ENCODE measurements at regions of chr1 and their contacts with region 1.

Region 1: GRCh38 chr1:232353001-232353400 is 276.9 kb downstream of the SIPA1L2 start:
- DNase-seq: no peak
- ATAC-seq: no peak
- H3K4me3 ChIP-seq: no peak overlapping the region
- H3K27ac ChIP-seq: no peak overlapping the region
- H3K4me1 ChIP-seq: no peaks in the 10 kb centered on the region
- H3K27me3 ChIP-seq: no peaks in the 10 kb centered on the region
- CTCF ChIP-seq: no peak

Region 2: GRCh38 chr1:232319072-232319471 is 33.9 kb before region 1 on chr1:
- CTCF ChIA-PET with region 1: no interaction called
- POLR2A ChIA-PET with region 1: interaction called, 11 read pairs
- intact Hi-C with region 1: no loop called
- DNase-seq: no peak
- ATAC-seq: no peak
- H3K4me3 ChIP-seq: no peak overlapping the region
- H3K27ac ChIP-seq: no peak overlapping the region
- H3K4me1 ChIP-seq: peaks cover 16% of the 10 kb centered on the region
- H3K27me3 ChIP-seq: no peaks in the 10 kb centered on the region
- CTCF ChIP-seq: no peak

Region 3: DNA sequence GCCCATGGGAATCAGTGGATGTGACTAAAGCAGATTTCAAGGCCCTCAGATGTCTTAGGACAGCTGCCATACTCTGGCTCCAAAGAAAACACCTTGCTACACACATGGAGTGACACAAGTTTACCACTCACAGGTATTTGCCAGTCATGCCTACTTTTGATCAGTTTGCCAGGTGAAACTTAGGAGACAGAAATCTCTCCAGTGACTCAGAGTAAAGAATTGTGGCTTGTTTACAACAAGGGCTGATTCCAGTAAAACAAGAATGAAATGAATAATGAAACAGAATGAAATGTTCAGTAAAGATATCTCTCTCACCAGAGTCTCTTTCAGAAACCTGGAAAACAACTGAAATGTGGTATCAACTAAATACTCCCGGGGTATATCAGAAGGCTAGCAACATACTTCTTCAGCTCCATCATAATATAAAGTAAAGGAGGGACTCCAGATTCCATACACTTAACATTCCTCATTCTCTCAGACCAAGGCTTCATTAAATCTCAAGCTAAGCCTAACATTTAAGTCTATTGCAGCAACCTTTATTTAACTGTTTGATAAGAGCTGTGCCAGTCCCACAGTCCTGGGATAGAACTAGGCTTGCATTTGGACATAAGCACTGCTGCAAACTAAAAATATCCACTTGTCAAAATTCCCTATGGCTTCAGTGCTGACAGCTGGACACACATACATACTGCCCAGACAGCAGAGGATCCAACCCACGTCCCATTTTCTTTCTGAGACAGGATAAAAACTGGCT is 133.6 kb after region 1 on chr1:
- CTCF ChIA-PET with region 1: no interaction called
- POLR2A ChIA-PET with region 1: no interaction called
- intact Hi-C with region 1: no loop called
- DNase-seq: peak; percentile 92
- ATAC-seq: peak; percentile 74
- H3K4me3 ChIP-seq: no peak overlapping the region
- H3K27ac ChIP-seq: peak overlapping the region; percentile 75
- H3K4me1 ChIP-seq: peaks cover 30% of the 10 kb centered on the region
- H3K27me3 ChIP-seq: no peaks in the 10 kb centered on the region
- CTCF ChIP-seq: no peak

Region 4: DNA sequence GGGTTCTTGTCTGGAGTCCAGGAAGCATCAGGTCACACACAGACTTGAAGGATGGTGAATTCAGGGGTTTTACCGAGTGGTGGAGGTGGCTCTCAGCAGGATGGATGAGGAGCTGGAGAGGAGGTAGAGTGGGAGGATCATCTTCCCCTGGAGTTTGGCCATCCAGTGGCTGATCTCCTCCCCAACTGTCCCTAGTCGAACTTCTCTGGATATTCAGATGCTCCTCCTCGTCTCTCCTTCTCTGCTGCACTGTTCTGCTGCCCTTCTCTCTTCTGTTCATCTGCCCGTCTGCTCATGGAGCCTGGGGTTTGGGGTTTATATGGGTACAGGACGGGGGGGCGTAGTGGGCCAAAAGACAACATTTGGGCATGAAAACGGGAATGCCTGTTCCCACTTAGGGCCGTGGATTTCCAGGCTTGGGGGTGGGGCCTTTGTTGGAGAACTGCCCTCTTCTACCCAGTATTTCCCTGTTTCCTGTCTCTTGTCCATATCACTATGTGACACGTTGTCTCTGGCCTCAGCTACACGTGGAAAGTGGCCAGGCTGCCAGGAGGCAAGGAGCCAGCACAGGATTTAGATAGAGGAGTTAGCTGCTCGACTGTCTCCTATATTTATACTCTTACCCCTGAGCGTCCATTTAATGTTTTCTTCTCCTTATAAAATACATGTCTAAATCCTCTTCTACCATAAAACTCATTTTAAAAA is 200.2 kb after region 1 on chr1:
- CTCF ChIA-PET with region 1: no interaction called
- POLR2A ChIA-PET with region 1: no interaction called
- intact Hi-C with region 1: no loop called
- DNase-seq: no peak
- ATAC-seq: no peak
- H3K4me3 ChIP-seq: no peak overlapping the region
- H3K27ac ChIP-seq: no peak overlapping the region
- H3K4me1 ChIP-seq: no peaks in the 10 kb centered on the region
- H3K27me3 ChIP-seq: no peaks in the 10 kb centered on the region
- CTCF ChIP-seq: no peak

Measured in PC-3 (cell line).